IMR-90 (cell line): ENCODE measurements at regions of chr2 and their contacts with region 1.

Region 1: DNA sequence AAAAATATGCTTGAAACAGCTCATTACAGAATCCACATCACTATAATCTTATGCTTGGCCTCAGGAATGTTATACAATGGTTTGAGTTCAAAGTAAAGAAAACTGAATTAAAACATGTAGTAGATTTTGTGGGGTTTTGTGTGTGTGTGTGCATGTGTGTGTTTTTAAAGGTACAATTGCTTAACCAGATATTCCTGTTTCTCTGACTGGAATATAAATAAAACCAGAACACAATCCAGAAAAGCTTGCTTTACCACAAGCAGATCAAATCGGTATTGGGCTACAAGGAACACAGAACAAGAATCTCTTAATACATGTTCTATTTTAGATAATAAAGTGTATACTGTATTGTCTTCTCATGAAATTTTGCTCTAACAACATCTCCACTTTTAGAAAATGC is 110.0 kb downstream of the TMEM247 start:
- DNase-seq: no peak
- ATAC-seq: no peak
- H3K4me3 ChIP-seq: no peak overlapping the region
- H3K27ac ChIP-seq: no peak overlapping the region
- H3K4me1 ChIP-seq: no peaks in the 10 kb centered on the region; the same call in 1 of the 2 replicates
- H3K27me3 ChIP-seq: no peaks in the 10 kb centered on the region
- CTCF ChIP-seq: no peak
- POLR2A ChIP-seq: no peak
- RAD21 ChIP-seq: no peak

Region 2: DNA sequence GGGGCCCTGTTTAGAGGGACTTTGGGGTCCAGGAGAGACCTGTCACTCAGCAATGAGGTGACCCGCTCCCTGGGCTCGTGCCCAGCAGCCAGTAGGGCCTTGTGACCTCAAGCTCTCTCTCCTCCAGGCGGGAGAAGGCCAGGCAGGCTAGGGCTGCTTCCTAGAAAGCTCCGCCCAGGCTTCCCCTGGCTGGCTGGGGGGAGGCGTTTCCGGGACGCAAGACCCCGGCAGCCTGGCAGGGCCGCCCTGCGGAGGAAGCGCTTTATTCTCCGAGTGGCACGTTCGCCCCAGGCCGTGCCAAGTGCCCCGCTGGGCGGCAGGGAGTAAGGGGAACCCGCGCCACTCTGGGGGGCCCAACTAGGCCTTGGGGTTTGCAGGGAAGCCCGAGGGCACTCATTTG is 313.4 kb before region 1 on chr2:
- CTCF ChIA-PET with region 1: no interaction called
- POLR2A ChIA-PET with region 1: no interaction called
- dilution Hi-C with region 1: no loop called
- in situ Hi-C with region 1: no loop called
- intact Hi-C with region 1: no loop called
- DNase-seq: no peak
- ATAC-seq: no peak
- H3K4me3 ChIP-seq: no peak overlapping the region
- H3K27ac ChIP-seq: no peak overlapping the region
- H3K4me1 ChIP-seq: peaks cover 3% of the 10 kb centered on the region; the same call in 1 of the 2 replicates
- H3K27me3 ChIP-seq: peaks cover 8% of the 10 kb centered on the region
- CTCF ChIP-seq: no peak
- POLR2A ChIP-seq: no peak
- RAD21 ChIP-seq: no peak

Region 3: DNA sequence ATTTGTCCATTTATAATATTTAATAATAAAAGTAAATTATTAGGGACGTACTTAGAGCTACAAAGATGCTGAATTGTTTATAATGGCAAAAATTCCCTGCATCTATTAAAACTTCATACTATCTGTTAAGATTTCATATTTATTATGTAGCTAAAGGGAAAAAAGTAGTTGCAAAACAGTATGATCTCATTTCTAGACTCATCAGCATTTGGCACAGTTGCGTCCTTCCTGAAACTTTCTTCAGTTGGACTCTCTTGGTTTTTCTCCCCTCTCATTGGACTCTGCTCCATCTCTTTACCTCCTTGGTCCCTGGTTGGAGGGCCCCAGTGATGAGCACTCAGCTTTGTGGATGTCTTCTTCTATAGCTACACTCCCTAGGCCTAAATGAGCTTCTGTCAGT is 10.4 kb before region 1 on chr2:
- CTCF ChIA-PET with region 1: no interaction called
- POLR2A ChIA-PET with region 1: interaction called, 13 read pairs
- dilution Hi-C with region 1: no loop called
- in situ Hi-C with region 1: no loop called
- intact Hi-C with region 1: no loop called
- DNase-seq: no peak
- ATAC-seq: no peak
- H3K4me3 ChIP-seq: no peak overlapping the region
- H3K27ac ChIP-seq: no peak overlapping the region
- H3K4me1 ChIP-seq: 0 out of 2 replicates have a peak, but pooled peaks cover 2% of the 10 kb centered on the region
- H3K27me3 ChIP-seq: no peaks in the 10 kb centered on the region
- CTCF ChIP-seq: no peak
- POLR2A ChIP-seq: no peak
- RAD21 ChIP-seq: no peak

Region 4: GRCh38 chr2:46632349-46632748 is 43.0 kb after region 1 on chr2:
- CTCF ChIA-PET with region 1: no interaction called
- POLR2A ChIA-PET with region 1: no interaction called
- dilution Hi-C with region 1: no loop called
- in situ Hi-C with region 1: no loop called
- intact Hi-C with region 1: no loop called
- DNase-seq: peak; percentile 77
- ATAC-seq: peak; percentile 89
- H3K4me3 ChIP-seq: no peak overlapping the region
- H3K27ac ChIP-seq: no peak overlapping the region
- H3K4me1 ChIP-seq: 0 out of 2 replicates have a peak, but pooled peaks cover 1% of the 10 kb centered on the region
- H3K27me3 ChIP-seq: no peaks in the 10 kb centered on the region
- CTCF ChIP-seq: peak; percentile 78
- POLR2A ChIP-seq: no peak
- RAD21 ChIP-seq: peak; percentile 84